SK-N-SH (cell line): ENCODE measurements at regions of chr1 and their contacts with region 1.

Region 1: DNA sequence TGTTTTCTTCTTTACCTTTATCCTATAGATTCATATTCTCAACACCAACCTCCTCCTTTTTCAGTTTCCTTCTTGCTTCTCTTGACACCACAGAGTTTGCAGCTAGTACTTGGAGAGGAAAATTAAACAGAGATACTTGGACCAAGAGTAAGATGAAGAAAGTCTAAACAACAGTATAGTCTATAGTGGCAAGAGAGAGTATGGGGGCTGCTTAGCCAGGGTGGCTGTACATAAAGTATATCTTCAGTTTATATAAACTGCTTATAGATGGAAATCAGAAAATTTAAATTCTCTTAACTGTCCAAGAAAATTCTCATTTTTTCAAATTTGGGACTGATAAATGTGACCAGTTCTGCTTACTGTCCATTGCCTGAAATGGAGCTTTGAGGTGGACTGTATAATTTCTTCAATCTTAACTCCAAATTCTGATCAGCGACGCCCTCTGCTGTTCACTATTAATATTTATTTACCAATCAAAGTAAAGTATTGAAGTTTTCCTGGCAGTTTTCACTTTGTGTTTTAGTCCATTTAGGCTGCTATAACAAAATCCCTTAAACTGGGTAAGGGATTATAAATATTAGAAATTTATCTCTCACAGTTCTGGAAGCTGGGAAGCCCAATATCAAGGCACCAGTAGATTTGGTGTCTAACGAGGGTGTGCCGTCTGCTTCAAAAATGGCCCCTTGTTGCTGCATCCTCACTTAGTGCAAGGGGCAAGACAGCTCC is 14.8 kb upstream of the METTL18 start:
- DNase-seq: peak; percentile 39
- H3K4me3 ChIP-seq: no peak overlapping the region; a peak in 1 of 4 replicates
- H3K27ac ChIP-seq: no peak overlapping the region
- H3K4me1 ChIP-seq: no peaks in the 10 kb centered on the region
- H3K27me3 ChIP-seq: no peaks in the 10 kb centered on the region
- CTCF ChIP-seq: peak; percentile 75
- EP300 ChIP-seq: no peak
- RAD21 ChIP-seq: peak; percentile 66

Region 2: GRCh38 chr1:169586395-169587255 is 222.9 kb before region 1 on chr1 and contains the start of gene F5:
- CTCF ChIA-PET with region 1: interaction called, 11 read pairs
- POLR2A ChIA-PET with region 1: no interaction called
- DNase-seq: peak; percentile 58
- H3K4me3 ChIP-seq: peak within 1 kb of the TSS; percentile 30 to 52
- H3K27ac ChIP-seq: no peak within 1 kb of the TSS
- H3K4me1 ChIP-seq: peaks cover 0 to 8% of the 10 kb centered on the region in 2 experiments; a peak in 1 of 4 replicates
- H3K27me3 ChIP-seq: peaks cover 24% of the 10 kb centered on the region; the same call in 1 of the 2 replicates
- CTCF ChIP-seq: peak; percentile 62
- EP300 ChIP-seq: no peak
- RAD21 ChIP-seq: peak; percentile 52
- polyA plus RNA-seq, gene F5: under 0.01 TPM in 1 of 2 replicates, not detected in the other

Region 3: DNA sequence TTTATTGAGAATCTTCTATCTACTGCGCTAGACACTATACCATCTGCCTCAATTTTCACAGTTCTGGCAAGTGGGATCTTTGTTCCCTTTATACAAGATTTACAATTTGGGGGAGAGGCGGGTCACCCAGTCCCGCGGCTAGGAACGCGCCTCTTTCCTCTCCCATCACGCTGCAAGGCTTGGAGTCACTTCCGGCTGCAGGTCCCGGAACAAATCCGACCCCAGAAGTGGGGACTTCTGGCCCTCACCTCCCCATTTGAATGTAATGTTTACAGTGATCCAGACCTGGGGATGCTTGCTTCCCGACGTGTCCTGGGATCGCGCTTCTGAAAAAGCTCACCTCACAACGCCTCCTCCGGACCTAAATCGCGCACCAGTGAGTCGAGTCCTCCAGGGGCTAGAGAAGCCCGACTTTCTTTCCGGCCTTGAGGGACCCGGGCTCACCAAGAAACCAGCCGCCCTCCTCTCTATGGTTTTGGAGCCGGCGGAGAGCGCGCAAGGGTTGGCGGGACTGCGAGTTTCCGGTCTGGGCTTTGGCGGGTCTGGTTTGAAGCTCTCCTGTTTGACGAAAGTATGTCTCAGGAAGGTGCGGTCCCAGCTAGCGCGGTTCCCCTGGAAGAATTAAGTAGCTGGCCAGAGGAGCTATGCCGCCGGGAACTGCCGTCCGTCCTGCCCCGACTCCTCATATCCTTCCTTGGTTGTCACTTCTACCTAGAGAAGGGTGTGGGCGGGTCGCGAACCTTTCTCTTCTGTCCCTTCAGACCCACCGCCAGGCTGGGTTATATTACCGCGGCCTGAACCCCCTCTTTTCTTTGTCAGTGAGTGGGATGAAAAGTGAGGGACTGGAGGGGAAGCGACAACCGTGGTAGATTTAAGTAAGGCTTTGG is 14.8 kb before region 1 on chr1 and contains the start of gene METTL18:
- CTCF ChIA-PET with region 1: interaction called, 19 read pairs
- POLR2A ChIA-PET with region 1: interaction called, 4 read pairs
- DNase-seq: peak; percentile 86
- H3K4me3 ChIP-seq: peak within 1 kb of the TSS; percentile 70 to 98
- H3K27ac ChIP-seq: peak within 1 kb of the TSS; percentile 71 to 98
- H3K4me1 ChIP-seq: peaks cover 0 to 13% of the 10 kb centered on the region in 2 experiments; a peak in 2 of 4 replicates
- H3K27me3 ChIP-seq: no peaks in the 10 kb centered on the region
- CTCF ChIP-seq: no peak
- EP300 ChIP-seq: 0 out of 4 replicates have a peak, but pooled peaks of 1 of the 2 experiments have one; percentile 8
- RAD21 ChIP-seq: no peak
- polyA plus RNA-seq, gene METTL18: 1.7 and 2.3 TPM in 2 replicates

Region 4: DNA sequence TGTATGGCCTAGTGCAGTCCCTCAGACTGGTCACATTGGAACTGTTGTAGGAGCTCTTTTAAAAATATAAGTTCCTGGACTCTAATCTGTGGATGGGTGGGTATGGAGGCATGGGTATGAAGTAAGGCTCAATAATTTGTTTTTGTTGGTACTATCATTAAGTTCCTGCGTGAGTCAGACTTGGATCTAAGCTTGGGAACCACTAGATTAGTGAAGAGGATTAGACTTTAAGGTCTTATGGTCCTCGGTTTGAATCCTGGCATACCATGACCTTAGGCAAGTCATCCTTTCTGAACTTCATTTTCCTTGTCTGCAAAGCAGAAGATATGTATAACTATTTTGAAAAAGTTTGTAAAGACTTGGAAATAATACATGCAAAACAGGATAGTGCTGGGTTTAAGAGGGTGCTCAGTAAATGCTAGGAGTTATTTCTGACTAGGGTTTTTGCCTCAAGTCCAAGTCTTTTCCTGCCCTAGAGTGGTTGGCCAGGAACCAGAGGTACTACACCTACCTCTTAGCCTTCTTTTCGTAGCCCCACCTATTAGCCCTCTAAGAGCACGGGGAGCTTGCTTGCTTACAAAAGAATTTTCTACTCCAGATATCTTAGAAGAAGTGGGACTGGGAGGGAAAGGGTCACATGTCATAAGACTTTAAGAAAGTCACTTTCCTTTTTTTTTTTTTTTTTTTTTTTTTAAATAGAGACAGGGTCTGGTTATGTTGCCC is 23.8 kb after region 1 on chr1:
- CTCF ChIA-PET with region 1: interaction called, 19 read pairs
- POLR2A ChIA-PET with region 1: no interaction called
- DNase-seq: no peak
- H3K4me3 ChIP-seq: no peak overlapping the region
- H3K27ac ChIP-seq: no peak overlapping the region
- H3K4me1 ChIP-seq: no peaks in the 10 kb centered on the region
- H3K27me3 ChIP-seq: no peaks in the 10 kb centered on the region
- CTCF ChIP-seq: no peak
- EP300 ChIP-seq: no peak
- RAD21 ChIP-seq: no peak

Region 5: DNA sequence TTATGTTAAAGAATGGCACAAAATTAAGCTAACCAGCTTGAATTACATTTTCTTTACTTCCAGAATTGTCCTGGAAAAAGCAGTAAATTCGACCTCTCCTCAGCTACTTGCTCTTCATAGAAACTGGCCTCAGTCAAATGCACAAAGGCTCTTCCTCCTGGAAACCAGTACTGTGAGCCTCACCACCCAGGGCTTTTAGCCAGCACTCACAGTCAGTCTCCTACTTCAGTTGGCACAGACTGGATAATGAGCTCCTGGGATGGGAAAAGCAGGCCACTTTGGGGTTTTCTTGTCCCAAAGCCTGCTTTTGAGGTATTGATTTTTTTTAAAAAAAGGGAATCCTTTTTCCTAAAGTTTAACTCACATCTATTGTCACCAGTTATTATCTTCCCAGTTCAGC is 43.8 kb after region 1 on chr1:
- CTCF ChIA-PET with region 1: interaction called, 10 read pairs
- POLR2A ChIA-PET with region 1: no interaction called
- DNase-seq: no peak
- H3K4me3 ChIP-seq: no peak overlapping the region
- H3K27ac ChIP-seq: no peak overlapping the region; a peak in 1 of 4 replicates
- H3K4me1 ChIP-seq: no peaks in the 10 kb centered on the region; a peak in 1 of 4 replicates
- H3K27me3 ChIP-seq: no peaks in the 10 kb centered on the region
- CTCF ChIP-seq: no peak
- EP300 ChIP-seq: no peak
- RAD21 ChIP-seq: no peak